ENCODE measurements at regions of chr5 and their contacts with region 1.

Region 1: GRCh38 chr5:175718401-175719108 is 60.7 kb downstream of the HRH2 start:
- DNase-seq: peak; percentile 84
- H3K4me3 Mint-ChIP-seq: no peak overlapping the region
- H3K27ac Mint-ChIP-seq: no peak overlapping the region
- H3K4me1 Mint-ChIP-seq: peaks cover 4% of the 10 kb centered on the region
- H3K27me3 Mint-ChIP-seq: no peaks in the 10 kb centered on the region

Region 2: GRCh38 chr5:175617447-175617846 is 101.1 kb before region 1 on chr5:
- CTCF ChIA-PET with region 1: interaction called, 10 read pairs
- POLR2A ChIA-PET with region 1: no interaction called
- intact Hi-C with region 1: no loop called
- DNase-seq: no peak
- H3K4me3 Mint-ChIP-seq: no peak overlapping the region
- H3K27ac Mint-ChIP-seq: no peak overlapping the region
- H3K4me1 Mint-ChIP-seq: peaks cover 11% of the 10 kb centered on the region
- H3K27me3 Mint-ChIP-seq: no peaks in the 10 kb centered on the region

Region 3: GRCh38 chr5:175696139-175696854 is 22.3 kb before region 1 on chr5:
- CTCF ChIA-PET with region 1: interaction called, 24 read pairs
- POLR2A ChIA-PET with region 1: no interaction called
- intact Hi-C with region 1: no loop called
- DNase-seq: peak; percentile 92
- H3K4me3 Mint-ChIP-seq: peak overlapping the region; percentile 60
- H3K27ac Mint-ChIP-seq: peak overlapping the region; percentile 90
- H3K4me1 Mint-ChIP-seq: peaks cover 16% of the 10 kb centered on the region
- H3K27me3 Mint-ChIP-seq: no peaks in the 10 kb centered on the region

Region 4: DNA sequence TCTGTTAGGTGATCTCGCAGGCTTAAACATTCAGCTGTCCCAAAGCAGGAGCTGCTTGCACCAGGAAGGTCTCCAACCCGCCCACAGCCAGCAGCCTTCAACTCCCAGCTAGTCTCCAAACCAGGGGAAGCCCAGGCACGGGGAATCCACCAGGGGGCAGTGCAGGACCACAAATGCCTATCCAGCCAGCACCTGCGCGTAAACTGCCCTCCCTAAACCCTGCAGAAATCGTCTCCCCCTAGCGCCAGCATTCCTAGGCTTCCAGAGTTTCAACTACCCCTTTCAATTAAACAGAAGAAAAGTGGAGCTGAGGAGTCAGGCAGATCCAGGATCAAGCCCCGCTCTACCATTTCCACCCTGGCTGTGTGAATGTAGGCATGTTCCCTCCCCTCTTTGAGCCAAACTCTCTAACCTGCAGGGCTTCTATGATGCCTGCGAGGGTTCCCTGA is 11.3 kb after region 1 on chr5:
- CTCF ChIA-PET with region 1: interaction called, 43 read pairs
- POLR2A ChIA-PET with region 1: no interaction called
- intact Hi-C with region 1: no loop called
- DNase-seq: peak; percentile 94
- H3K4me3 Mint-ChIP-seq: no peak overlapping the region
- H3K27ac Mint-ChIP-seq: no peak overlapping the region
- H3K4me1 Mint-ChIP-seq: peaks cover 7% of the 10 kb centered on the region
- H3K27me3 Mint-ChIP-seq: peaks cover 20% of the 10 kb centered on the region

Measured in activated CD4-positive, alpha-beta memory T cell treated with anti-CD3 and anti-CD28 coated beads for 36 hours (primary cell).